ENCODE measurements at regions of chr17 and their contacts with region 1.

Region 1: GRCh38 chr17:27654654-27655524 is 23.9 kb downstream of the LGALS9 start:
- DNase-seq: peak; percentile 93
- H3K4me3 ChIP-seq: peak overlapping the region in 1 of 2 experiments; percentile 43; a peak in 1 of 4 replicates
- H3K27ac ChIP-seq: no peak overlapping the region
- H3K4me1 ChIP-seq: no peaks in the 10 kb centered on the region; a peak in 1 of 4 replicates
- H3K27me3 ChIP-seq: no peaks in the 10 kb centered on the region
- CTCF ChIP-seq: peak; percentile 93
- EP300 ChIP-seq: no peak
- RAD21 ChIP-seq: peak; percentile 68

Region 2: GRCh38 chr17:27622986-27623385 is 31.9 kb before region 1 on chr17:
- CTCF ChIA-PET with region 1: interaction called, 365 read pairs
- POLR2A ChIA-PET with region 1: no interaction called
- DNase-seq: no peak
- H3K4me3 ChIP-seq: no peak overlapping the region
- H3K27ac ChIP-seq: no peak overlapping the region
- H3K4me1 ChIP-seq: no peaks in the 10 kb centered on the region
- H3K27me3 ChIP-seq: no peaks in the 10 kb centered on the region
- CTCF ChIP-seq: no peak
- EP300 ChIP-seq: no peak
- RAD21 ChIP-seq: no peak

Region 3: DNA sequence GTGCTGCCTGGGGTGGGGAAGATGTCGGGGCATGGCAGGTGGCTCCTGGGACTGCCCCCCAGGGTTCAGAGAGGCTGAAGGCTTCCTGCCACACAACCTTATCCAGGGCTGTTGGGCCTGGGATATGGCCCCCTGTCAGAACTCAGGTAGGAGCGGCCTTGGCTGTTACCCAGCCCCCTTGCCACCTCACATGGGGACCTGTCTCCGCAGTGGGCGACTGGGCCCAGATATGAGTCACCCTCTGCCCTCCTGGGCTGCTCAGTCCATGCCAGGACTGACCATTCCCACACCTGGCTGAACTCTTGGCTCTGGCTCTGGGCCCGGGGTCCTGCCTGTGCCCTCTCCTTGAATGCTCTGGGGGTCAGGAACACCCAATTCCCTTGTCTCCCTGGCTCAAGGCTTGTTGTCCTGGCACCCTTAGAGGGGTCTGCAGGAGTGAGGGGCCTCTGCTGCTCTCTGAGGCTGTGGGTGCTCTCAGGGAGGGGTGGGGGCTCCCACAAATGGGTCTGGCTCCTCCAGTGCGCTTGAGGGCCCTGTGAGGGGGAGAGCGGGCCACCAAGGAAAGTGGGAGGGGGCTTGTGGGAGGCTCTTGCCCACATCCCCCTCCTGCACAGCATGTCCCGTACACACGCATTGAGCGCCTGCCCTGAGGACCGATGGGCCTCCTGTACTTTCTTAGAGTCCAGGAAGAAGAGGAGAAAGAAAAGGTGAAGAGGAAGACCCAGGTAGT is 12.1 kb after region 1 on chr17:
- CTCF ChIA-PET with region 1: interaction called, 35 read pairs
- POLR2A ChIA-PET with region 1: no interaction called
- DNase-seq: no peak
- H3K4me3 ChIP-seq: no peak overlapping the region
- H3K27ac ChIP-seq: no peak overlapping the region
- H3K4me1 ChIP-seq: no peaks in the 10 kb centered on the region
- H3K27me3 ChIP-seq: no peaks in the 10 kb centered on the region
- CTCF ChIP-seq: no peak
- EP300 ChIP-seq: no peak
- RAD21 ChIP-seq: no peak

Region 4: DNA sequence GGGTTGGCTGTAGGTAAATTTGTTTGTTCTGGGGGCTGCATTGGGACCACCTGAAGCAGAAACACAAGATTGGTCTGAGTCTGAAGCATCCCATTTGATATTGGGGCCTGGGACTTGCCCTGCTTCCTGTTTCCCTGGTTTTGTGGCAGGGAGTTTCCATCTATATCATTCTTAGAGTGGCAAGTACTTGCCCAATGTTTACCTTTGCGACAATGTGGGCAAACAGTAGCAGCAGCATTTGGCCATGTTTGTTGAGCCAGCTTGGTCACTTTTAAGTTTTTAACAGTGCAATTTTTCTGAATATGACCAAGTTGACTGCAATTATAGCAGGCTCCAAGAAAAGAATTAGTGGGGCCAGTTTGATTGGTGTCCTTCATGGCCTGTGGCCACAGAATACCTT is 37.9 kb after region 1 on chr17:
- CTCF ChIA-PET with region 1: no interaction called
- POLR2A ChIA-PET with region 1: no interaction called
- DNase-seq: no peak
- H3K4me3 ChIP-seq: no peak overlapping the region
- H3K27ac ChIP-seq: no peak overlapping the region
- H3K4me1 ChIP-seq: no peaks in the 10 kb centered on the region
- H3K27me3 ChIP-seq: no peaks in the 10 kb centered on the region
- CTCF ChIP-seq: no peak
- EP300 ChIP-seq: no peak
- RAD21 ChIP-seq: no peak

Region 5: GRCh38 chr17:27741361-27741861 is 86.5 kb after region 1 on chr17:
- CTCF ChIA-PET with region 1: interaction called, 14 read pairs
- POLR2A ChIA-PET with region 1: no interaction called
- DNase-seq: no peak
- H3K4me3 ChIP-seq: no peak overlapping the region
- H3K27ac ChIP-seq: no peak overlapping the region
- H3K4me1 ChIP-seq: no peaks in the 10 kb centered on the region
- H3K27me3 ChIP-seq: no peaks in the 10 kb centered on the region; the same call in 1 of the 2 replicates
- CTCF ChIP-seq: no peak
- EP300 ChIP-seq: no peak
- RAD21 ChIP-seq: no peak

Region 6: GRCh38 chr17:27760069-27760885 is 105.4 kb after region 1 on chr17:
- CTCF ChIA-PET with region 1: interaction called, 286 read pairs
- POLR2A ChIA-PET with region 1: interaction called, 4 read pairs
- DNase-seq: peak; percentile 77
- H3K4me3 ChIP-seq: no peak overlapping the region; a peak in 1 of 4 replicates
- H3K27ac ChIP-seq: no peak overlapping the region
- H3K4me1 ChIP-seq: no peaks in the 10 kb centered on the region
- H3K27me3 ChIP-seq: no peaks in the 10 kb centered on the region
- CTCF ChIP-seq: peak; percentile 86
- EP300 ChIP-seq: no peak
- RAD21 ChIP-seq: peak; percentile 65

Measured in SK-N-SH (cell line).